Endothelial cell of umbilical vein (primary cell): ENCODE measurements at regions of chrX and their contacts with region 1.

Region 1: DNA sequence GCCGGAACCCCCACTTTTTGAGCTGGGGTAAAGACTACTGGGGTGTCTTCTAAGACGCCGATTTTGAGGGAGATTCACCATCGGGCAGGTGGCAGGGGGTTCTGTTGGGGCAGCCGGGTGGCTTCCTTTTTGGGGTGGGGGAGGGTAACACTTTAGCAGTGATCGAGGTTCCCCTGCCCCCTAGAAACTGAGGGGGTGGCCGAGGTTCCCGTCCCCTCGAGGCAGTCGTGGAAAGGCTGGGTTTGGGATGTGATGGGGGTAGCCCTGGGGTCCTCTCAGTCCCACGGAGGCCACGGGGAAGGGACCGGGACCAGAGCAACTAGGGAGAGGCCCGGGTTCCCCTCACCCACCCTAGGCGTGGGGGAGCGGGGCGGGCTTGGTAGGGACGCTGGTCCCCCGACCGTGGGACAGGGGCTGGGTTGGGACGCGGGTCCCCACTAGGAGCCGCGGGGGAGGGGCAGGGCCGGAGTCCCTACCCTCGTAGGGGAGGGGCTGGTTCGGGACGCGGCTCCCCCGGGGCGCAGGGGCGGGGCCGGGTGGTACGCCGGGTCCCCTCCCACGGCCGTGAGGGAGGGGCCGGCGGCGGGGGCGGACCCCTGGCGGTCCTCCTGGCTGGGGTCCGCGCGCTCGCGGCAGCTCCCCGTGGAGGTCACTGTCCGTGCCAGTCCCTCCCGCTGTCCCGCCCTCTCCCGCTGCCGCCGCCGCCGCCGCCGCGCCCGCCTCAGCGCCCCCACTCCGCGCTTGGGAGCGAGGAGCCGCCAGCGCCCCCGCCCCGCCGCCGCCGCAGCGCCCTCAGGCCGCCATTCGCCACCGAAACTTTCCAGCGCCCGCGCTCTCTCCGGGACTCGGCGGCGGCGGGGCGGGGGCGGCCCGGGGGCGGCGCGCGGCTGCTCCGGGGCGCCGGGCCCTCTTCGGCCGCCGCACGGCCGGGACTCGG is at the start of gene TBL1X:
- DNase-seq: peak; percentile 32
- H3K4me3 ChIP-seq: peak within 1 kb of the TSS; percentile 59 to 79 (median 68)
- H3K27ac ChIP-seq: peak within 1 kb of the TSS; percentile 53
- H3K4me1 ChIP-seq: peaks cover 15% of the 10 kb centered on the region
- H3K27me3 ChIP-seq: no peaks in the 10 kb centered on the region
- CTCF ChIP-seq: no peak
- POLR2A ChIP-seq: no peak
- total RNA-seq, gene TBL1X: 22.1 and 25.3 TPM in 2 replicates

Region 2: DNA sequence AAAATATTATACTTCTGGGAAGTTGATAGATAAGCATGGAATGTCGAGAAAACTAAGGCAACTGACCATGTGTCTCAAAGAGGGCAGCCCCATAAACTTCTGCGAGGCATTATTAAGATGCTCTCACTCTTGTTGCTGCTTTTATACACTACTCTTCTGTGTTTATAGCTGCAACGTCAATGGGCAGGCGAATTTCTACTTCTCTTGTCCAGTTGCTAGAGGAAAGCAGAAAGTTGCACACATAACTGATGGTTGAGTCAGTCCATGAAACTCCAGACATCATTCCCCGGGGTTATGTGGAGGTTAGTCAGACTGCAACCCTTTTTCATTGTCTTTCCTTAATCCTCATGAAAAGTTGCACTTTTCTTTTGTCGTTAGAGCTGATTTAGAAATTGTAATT is 960.3 kb before region 1 on chrX:
- CTCF ChIA-PET with region 1: no interaction called
- POLR2A ChIA-PET with region 1: no interaction called
- dilution Hi-C with region 1: no loop called
- intact Hi-C with region 1: no loop called
- DNase-seq: no peak
- H3K4me3 ChIP-seq: no peak overlapping the region
- H3K27ac ChIP-seq: no peak overlapping the region
- H3K4me1 ChIP-seq: no peaks in the 10 kb centered on the region
- H3K27me3 ChIP-seq: no peaks in the 10 kb centered on the region
- CTCF ChIP-seq: no peak
- POLR2A ChIP-seq: no peak

Region 3: GRCh38 chrX:9341291-9342201 is 123.2 kb before region 1 on chrX:
- CTCF ChIA-PET with region 1: interaction called, 7 read pairs
- POLR2A ChIA-PET with region 1: interaction called, 5 read pairs
- dilution Hi-C with region 1: no loop called
- intact Hi-C with region 1: loop called (anchors 1 kb)
- DNase-seq: peak; percentile 54
- H3K4me3 ChIP-seq: peak overlapping the region in 1 of 3 experiments; percentile 59
- H3K27ac ChIP-seq: peak overlapping the region; percentile 57
- H3K4me1 ChIP-seq: peaks cover 9% of the 10 kb centered on the region
- H3K27me3 ChIP-seq: no peaks in the 10 kb centered on the region
- CTCF ChIP-seq: no peak
- POLR2A ChIP-seq: no peak

Region 4: DNA sequence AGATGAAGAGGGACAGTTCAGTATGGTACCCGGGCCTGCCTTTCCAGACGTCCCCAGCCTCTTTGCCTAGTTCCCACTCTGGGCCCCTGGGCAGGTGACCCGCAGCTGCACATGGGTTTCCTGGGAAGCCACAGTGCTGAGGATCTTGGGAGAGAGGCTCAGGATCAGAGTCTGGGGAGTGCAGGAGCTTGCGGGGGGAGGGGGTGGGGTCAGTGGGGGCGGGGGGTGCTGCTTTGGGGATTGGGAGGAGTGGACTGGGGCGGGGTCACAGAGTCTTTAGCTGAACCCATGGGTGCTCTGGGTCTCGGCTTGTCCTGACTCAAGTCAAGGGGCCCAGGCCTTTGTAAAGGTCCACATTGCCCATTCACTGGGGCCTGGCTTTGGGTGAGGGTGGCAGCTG is 63.8 kb after region 1 on chrX:
- CTCF ChIA-PET with region 1: no interaction called
- POLR2A ChIA-PET with region 1: no interaction called
- dilution Hi-C with region 1: no loop called
- intact Hi-C with region 1: no loop called
- DNase-seq: no peak
- H3K4me3 ChIP-seq: no peak overlapping the region
- H3K27ac ChIP-seq: no peak overlapping the region
- H3K4me1 ChIP-seq: peaks cover 5% of the 10 kb centered on the region
- H3K27me3 ChIP-seq: no peaks in the 10 kb centered on the region
- CTCF ChIP-seq: no peak
- POLR2A ChIP-seq: no peak

Region 5: GRCh38 chrX:9566150-9566621 is 101.5 kb after region 1 on chrX:
- CTCF ChIA-PET with region 1: no interaction called
- POLR2A ChIA-PET with region 1: no interaction called
- dilution Hi-C with region 1: no loop called
- intact Hi-C with region 1: loop called (anchors 1 kb)
- DNase-seq: peak; percentile 76
- H3K4me3 ChIP-seq: no peak overlapping the region
- H3K27ac ChIP-seq: no peak overlapping the region
- H3K4me1 ChIP-seq: peaks cover 15% of the 10 kb centered on the region
- H3K27me3 ChIP-seq: no peaks in the 10 kb centered on the region
- CTCF ChIP-seq: no peak
- POLR2A ChIP-seq: no peak

Region 6: GRCh38 chrX:9662148-9662547 is 197.4 kb after region 1 on chrX:
- CTCF ChIA-PET with region 1: no interaction called
- POLR2A ChIA-PET with region 1: no interaction called
- dilution Hi-C with region 1: no loop called
- intact Hi-C with region 1: loop called (anchors 2 kb)
- DNase-seq: peak; percentile 64
- H3K4me3 ChIP-seq: no peak overlapping the region
- H3K27ac ChIP-seq: peak overlapping the region; percentile 84
- H3K4me1 ChIP-seq: peaks cover 31% of the 10 kb centered on the region
- H3K27me3 ChIP-seq: no peaks in the 10 kb centered on the region
- CTCF ChIP-seq: no peak
- POLR2A ChIP-seq: no peak

Region 7: GRCh38 chrX:9859711-9860555 is 395.2 kb after region 1 on chrX:
- CTCF ChIA-PET with region 1: no interaction called
- POLR2A ChIA-PET with region 1: no interaction called
- dilution Hi-C with region 1: no loop called
- intact Hi-C with region 1: loop called (anchors 10 kb)
- DNase-seq: no peak
- H3K4me3 ChIP-seq: no peak overlapping the region
- H3K27ac ChIP-seq: no peak overlapping the region
- H3K4me1 ChIP-seq: peaks cover 21% of the 10 kb centered on the region
- H3K27me3 ChIP-seq: no peaks in the 10 kb centered on the region
- CTCF ChIP-seq: no peak
- POLR2A ChIP-seq: no peak